Tibial artery (tissue), 4 donors: ENCODE measurements at regions of chr3 and their contacts with region 1.

Region 1: GRCh38 chr3:179562591-179563270 is at the start of gene ACTL6A:
- DNase-seq: peak; percentile 100
- H3K4me3 ChIP-seq: peak within 1 kb of the TSS; percentile 79 to 88
- H3K27ac ChIP-seq: peak within 1 kb of the TSS; percentile 84 to 94
- H3K4me1 ChIP-seq: peaks cover 0 to 15% (median 8%) of the 10 kb centered on the region in 4 donors
- H3K27me3 ChIP-seq: no peaks in the 10 kb centered on the region
- CTCF ChIP-seq: no peak

Region 2: GRCh38 chr3:179347345-179348194 is 215.2 kb before region 1 on chr3 and contains the start of gene MFN1:
- intact Hi-C with region 1: loop called (anchors 10 kb)
- DNase-seq: peak; percentile 97 to 98
- H3K4me3 ChIP-seq: peak within 1 kb of the TSS; percentile 66 to 69
- H3K27ac ChIP-seq: peak within 1 kb of the TSS; percentile 78 to 92
- H3K4me1 ChIP-seq: peaks cover 0 to 26% (median 12%) of the 10 kb centered on the region in 4 donors
- H3K27me3 ChIP-seq: no peaks in the 10 kb centered on the region
- CTCF ChIP-seq: no peak

Region 3: GRCh38 chr3:179421500-179421899 is 141.2 kb before region 1 on chr3:
- intact Hi-C with region 1: loop called (anchors 5 kb)
- DNase-seq: peak; percentile 43 to 72
- H3K4me3 ChIP-seq: no peak overlapping the region
- H3K27ac ChIP-seq: peak overlapping the region in 1 of 2 donors; percentile 32
- H3K4me1 ChIP-seq: peaks cover 0 to 16% (median 3%) of the 10 kb centered on the region in 4 donors
- H3K27me3 ChIP-seq: no peaks in the 10 kb centered on the region
- CTCF ChIP-seq: peak; percentile 56 to 63